Right ventricle myocardium superior (tissue), 1 donor: ENCODE measurements at regions of chr15 and their contacts with region 1.

Region 1: DNA sequence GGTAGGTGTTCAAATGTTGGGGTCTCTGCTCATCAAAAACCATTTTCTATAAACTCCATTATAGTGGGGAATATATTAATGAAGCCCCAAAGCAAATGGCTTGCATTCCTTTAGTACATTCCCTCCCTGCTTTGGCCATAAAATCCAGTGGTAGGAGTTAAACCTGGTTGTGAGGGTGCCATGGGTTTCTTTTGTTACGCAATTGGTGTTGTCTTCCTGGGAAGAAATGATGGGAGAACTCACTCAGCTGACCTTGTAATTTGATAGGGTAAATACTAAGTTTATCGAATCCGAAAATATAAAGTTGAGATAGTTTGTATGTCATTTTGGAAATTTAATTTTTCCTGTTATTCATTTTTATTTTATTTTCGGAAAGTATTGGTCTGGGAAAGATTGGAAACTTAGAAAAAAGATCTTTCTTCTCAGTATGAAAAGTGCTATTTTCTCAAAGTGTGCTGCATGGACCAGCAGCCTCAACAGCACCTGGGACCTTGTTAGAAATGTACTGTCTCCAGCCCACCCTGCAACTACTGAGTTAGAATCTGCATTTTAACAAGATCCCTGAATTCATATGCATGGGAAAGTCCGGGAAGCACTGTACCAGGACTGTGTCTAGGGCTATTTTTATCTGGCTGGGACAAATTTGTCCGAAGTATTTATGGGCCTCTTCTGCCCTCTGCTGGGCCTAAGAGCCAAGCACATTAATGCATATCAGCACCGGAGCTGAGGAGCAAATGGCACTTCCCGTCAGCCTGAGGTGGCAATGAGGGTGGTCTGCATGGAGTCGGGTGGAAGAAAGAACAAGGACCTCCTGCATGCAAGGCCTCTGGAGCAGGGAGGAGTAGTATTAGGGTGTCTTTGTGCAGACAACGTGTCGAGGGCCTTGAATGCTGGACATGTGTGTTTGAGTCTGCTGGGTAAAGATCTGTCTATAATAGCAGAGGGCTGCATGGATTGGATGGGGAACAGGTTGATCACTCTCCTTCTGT is 54.7 kb downstream of the FAM81A start:
- DNase-seq: peak; percentile 65
- ATAC-seq: peak; percentile 93

Region 2: DNA sequence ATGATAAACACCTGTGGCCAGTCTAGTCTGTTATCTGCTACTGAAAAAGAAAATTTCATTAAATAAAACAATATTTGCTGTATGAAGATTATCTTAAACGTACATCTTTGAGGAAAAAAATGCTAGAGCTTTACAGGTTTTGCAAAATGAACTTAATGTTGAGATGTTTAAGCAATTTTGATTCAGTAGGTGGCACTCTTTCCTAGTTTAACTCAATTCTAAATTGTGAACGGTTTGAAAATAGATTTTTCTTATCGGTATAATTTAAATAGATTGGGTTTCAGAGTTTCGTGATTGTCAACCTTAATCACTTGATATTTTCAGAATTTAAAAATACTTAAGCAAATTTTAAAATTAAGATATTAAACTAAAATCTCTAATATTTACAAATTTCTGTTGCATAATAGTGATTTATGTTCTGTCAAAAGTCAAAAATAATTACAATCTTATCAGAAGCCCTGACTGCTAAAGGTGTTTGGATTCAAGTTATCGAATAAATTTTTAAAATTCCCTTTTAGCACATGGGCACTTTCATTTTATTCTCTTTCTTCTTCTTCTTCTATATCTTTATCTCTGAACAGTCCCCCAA is 512.2 kb before region 1 on chr15:
- intact Hi-C with region 1: loop called (anchors 5 kb)
- DNase-seq: no peak
- ATAC-seq: peak; percentile 55

Region 3: DNA sequence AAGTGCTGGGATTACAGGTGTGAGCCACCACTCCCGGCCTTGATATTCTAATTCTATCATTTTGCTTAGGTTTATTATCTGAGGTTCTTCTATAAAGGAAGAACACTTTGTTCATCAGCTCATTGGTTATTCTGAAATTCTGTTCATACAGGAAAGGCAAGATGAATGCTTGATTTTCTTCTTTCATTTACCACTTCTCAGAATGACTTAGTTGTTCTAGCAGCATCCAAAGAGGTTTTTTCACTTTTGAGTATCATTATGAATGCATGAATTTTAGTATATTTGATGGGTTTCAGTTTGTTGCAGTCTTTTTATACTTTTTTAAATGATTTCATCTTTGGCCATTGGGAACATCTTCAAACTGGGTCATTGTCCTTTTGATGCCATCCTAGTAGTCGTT is 453.5 kb before region 1 on chr15:
- intact Hi-C with region 1: no loop called
- DNase-seq: no peak
- ATAC-seq: no peak

Region 4: DNA sequence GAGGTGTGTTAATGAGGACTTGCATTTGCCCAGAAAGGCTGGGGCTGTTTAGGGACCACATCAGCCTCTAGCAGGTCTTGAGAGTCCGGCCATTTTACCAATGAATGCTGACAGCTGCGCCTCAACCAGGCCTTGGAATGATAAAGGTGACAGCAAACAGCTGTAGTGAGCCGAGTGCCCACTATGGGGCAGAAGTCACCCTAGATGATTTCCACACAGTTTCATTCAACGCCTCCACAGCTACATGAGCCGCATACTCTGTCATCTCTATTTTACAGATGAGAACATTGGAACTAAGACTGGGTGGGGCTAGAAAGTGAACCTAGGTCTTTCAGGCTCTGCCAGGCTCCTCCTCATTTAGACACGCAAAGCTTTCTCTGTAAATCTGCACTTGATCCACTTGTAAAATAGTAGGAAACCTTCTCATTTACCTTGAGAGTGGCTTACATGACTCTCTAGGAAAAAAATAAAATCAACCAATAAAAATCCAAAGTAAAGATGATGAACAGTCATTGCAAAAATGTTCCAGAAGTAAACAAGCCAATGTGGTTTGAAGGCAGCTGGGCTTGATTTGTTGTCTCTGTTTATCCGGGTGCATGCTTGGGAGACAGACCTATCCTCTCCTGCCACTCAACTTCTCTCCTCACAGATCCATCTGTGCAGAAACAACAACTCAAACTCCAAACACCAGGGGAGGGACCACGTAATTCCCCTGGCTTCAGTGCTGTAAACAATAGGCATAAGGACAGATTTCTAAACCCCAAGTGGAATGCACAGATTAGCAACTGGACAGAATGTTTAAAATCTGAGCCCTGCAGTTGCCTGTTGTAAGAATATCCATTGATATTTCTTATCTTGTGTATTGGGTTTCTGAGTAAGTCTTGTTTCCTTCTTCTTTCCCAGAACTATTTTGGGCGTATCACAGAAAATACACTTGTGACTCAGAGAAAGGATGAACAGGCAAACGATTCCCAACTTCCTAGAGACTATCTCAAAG is 317.6 kb before region 1 on chr15:
- intact Hi-C with region 1: loop called (anchors 5 kb)
- DNase-seq: peak; percentile 57
- ATAC-seq: peak; percentile 85

Region 5: GRCh38 chr15:59247364-59247763 is 245.3 kb before region 1 on chr15:
- intact Hi-C with region 1: loop called (anchors 5 kb)
- DNase-seq: no peak
- ATAC-seq: peak; percentile 89

Region 6: DNA sequence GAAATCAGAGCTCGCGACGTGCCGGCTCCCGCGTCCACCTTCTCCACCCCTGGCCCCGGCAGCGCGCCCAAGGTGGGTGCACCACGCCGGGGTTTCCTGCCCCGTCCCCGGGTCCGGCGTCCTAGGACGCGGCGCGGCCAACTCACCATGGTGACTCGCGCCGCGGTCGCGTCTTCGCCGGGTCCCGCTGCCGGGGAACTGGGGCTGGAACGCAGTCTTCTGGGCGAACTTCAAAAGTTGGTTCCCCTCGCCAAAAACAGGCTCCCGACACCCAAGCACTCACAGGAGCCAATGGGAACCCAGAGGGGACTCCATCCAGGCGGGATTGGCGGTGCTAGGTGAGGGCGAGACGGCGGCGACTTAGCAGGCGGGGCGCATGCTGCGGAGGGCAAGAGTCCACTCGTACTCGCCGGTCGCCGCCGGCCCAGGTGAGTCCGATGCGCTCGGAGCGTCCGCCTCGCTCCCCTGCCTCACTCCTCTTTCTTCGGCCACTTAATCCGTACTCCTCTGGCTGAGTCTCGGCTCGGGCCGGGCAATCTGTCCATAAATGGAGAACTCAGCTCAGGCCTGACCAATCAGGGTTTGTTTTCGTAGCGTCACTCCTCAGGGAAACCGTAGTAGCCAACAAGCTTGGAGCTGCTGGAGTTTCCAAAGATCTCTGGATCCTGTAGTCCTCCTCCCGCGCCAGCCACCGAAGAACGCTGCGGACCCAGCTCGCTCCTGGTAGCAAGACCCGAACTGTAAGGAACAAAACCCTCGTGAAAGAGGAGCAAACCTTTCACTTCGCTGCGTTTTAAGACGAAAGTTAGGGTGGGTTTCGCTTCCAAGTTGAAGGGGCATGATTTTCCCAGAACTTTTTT is 120.1 kb before region 1 on chr15 and contains the start of gene MYO1E:
- intact Hi-C with region 1: loop called (anchors 5 kb)
- DNase-seq: peak; percentile 88
- ATAC-seq: peak; percentile 96
- total RNA-seq, gene MYO1E: 29.9 TPM

Region 7: DNA sequence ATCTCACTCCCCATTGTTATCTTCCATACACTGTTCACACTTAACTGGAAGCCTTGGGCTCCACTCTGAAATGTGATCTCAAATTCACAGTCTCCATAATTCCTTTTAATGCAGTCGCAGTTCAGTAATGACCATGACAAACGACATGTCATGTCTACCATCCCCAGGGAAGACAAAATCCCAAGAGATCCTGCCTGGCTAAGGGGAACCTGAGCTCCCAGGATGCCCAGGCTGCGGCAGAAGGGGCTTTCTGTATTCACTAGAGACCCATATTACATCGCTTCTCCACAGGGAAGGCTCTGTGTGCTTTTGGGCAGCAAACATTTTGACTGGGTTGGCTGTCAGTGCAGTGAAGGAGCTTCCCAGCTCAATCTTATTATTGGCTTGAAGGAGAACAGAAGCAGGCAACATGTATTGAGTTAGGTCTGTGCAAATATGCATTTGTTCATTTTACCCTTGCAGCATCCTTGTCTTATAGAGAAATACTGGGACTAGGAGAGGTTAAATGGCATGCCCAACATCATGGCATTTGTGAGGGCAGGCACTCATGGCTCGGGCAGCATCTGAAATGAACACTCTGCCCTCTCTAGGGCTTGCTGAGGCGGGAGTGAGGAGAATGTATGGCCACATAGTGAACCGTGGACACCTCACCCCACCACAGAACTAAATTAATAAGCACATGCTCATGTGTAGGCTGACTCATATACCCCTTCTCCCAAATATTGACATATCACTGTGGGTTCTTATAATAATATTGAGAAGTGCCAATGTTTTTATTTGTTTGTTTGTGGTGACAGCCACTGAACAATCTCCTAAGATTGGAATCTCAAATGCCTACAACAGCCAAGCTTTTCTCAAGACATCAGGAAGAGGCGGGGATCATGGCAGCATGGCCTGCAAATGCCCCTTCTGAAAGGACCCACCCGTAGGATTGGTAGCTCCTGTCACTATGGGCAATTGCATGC is 369.8 kb after region 1 on chr15:
- intact Hi-C with region 1: no loop called
- DNase-seq: no peak
- ATAC-seq: no peak

Region 8: GRCh38 chr15:59885832-59886231 is 393.1 kb after region 1 on chr15:
- intact Hi-C with region 1: no loop called
- DNase-seq: no peak
- ATAC-seq: no peak